PC-3 (cell line): ENCODE measurements at regions of chr2 and their contacts with region 1.

Region 1: GRCh38 chr2:96739633-96740428 is at the start of gene LMAN2L:
- DNase-seq: peak; percentile 98
- ATAC-seq: peak; percentile 100
- H3K4me3 ChIP-seq: peak within 1 kb of the TSS; percentile 79
- H3K27ac ChIP-seq: no peak within 1 kb of the TSS
- H3K4me1 ChIP-seq: peaks cover 17% of the 10 kb centered on the region; the same call in 1 of the 2 replicates
- H3K27me3 ChIP-seq: no peaks in the 10 kb centered on the region
- CTCF ChIP-seq: no peak
- total RNA-seq, gene LMAN2L: 27.8 and 31.4 TPM in 2 replicates

Region 2: GRCh38 chr2:96638144-96639121 is 101.4 kb before region 1 on chr2 and contains the start of gene KANSL3:
- CTCF ChIA-PET with region 1: no interaction called
- POLR2A ChIA-PET with region 1: no interaction called
- intact Hi-C with region 1: loop called (anchors 1 kb)
- DNase-seq: peak; percentile 96
- ATAC-seq: peak; percentile 70
- H3K4me3 ChIP-seq: peak within 1 kb of the TSS; percentile 77
- H3K27ac ChIP-seq: peak within 1 kb of the TSS; percentile 77
- H3K4me1 ChIP-seq: peaks cover 18% of the 10 kb centered on the region; the same call in 1 of the 2 replicates
- H3K27me3 ChIP-seq: no peaks in the 10 kb centered on the region
- CTCF ChIP-seq: no peak
- total RNA-seq, gene KANSL3: 30.6 and 35.7 TPM in 2 replicates

Region 3: GRCh38 chr2:96801005-96801785 is 61.4 kb after region 1 on chr2:
- CTCF ChIA-PET with region 1: no interaction called
- POLR2A ChIA-PET with region 1: no interaction called
- intact Hi-C with region 1: loop called (anchors 2 kb)
- DNase-seq: peak; percentile 75
- ATAC-seq: peak; percentile 96
- H3K4me3 ChIP-seq: no peak overlapping the region
- H3K27ac ChIP-seq: no peak overlapping the region
- H3K4me1 ChIP-seq: no peaks in the 10 kb centered on the region
- H3K27me3 ChIP-seq: no peaks in the 10 kb centered on the region
- CTCF ChIP-seq: peak; percentile 92

Region 4: GRCh38 chr2:96816128-96816835 is 76.5 kb after region 1 on chr2 and contains the start of gene CNNM3:
- CTCF ChIA-PET with region 1: interaction called, 5 read pairs
- POLR2A ChIA-PET with region 1: interaction called, 4 read pairs
- intact Hi-C with region 1: loop called (anchors 5 kb)
- DNase-seq: peak; percentile 94
- ATAC-seq: peak; percentile 91
- H3K4me3 ChIP-seq: peak within 1 kb of the TSS; percentile 76
- H3K27ac ChIP-seq: no peak within 1 kb of the TSS; the same call in 1 of the 2 replicates
- H3K4me1 ChIP-seq: peaks cover 18% of the 10 kb centered on the region
- H3K27me3 ChIP-seq: no peaks in the 10 kb centered on the region
- CTCF ChIP-seq: peak; percentile 39
- total RNA-seq, gene CNNM3: 9.0 and 12.3 TPM in 2 replicates